T-cell (primary cell): ENCODE measurements at regions of chr2 and their contacts with region 1.

Region 1: DNA sequence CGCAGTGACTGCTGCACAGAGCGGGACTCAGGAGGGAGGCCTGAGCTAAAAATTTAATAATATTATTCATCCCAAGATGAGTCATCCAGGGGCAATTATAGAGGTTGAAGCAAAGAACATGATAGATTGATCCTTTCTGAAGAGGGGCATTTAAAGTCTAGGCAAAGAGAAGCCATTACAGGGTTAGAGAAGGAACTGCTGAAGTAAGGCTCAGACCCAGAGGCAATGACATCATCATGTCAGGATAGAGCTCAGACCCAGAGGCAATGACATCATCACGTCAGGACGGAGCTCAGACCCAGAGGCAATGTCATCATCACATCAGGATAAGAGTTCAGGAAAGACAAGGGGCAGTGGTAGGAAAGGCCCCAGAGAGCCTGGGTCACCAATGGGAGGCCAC is 184.0 kb downstream of the TMEM18 start:
- DNase-seq: no peak
- ATAC-seq: no peak
- H3K4me3 ChIP-seq: no peak overlapping the region
- H3K4me3 Mint-ChIP-seq: no peak overlapping the region
- H3K27ac ChIP-seq: no peak overlapping the region
- H3K27ac Mint-ChIP-seq: no peak overlapping the region
- H3K4me1 ChIP-seq: no peaks in the 10 kb centered on the region
- H3K4me1 Mint-ChIP-seq: peaks cover 0 to 5% (median 0%) of the 10 kb centered on the region in 3 donors
- H3K27me3 ChIP-seq: peaks cover 0 to 15% of the 10 kb centered on the region in 2 experiments
- H3K27me3 Mint-ChIP-seq: peaks cover 16 to 17% of the 10 kb centered on the region in 2 donors

Region 2: GRCh38 chr2:505941-506340 is 12.7 kb after region 1 on chr2:
- CTCF ChIA-PET with region 1: no interaction called
- POLR2A ChIA-PET with region 1: interaction called in 1 of 2 experiments, 12 read pairs
- DNase-seq: no peak
- ATAC-seq: no peak
- H3K4me3 ChIP-seq: no peak overlapping the region
- H3K4me3 Mint-ChIP-seq: no peak overlapping the region
- H3K27ac ChIP-seq: no peak overlapping the region
- H3K27ac Mint-ChIP-seq: no peak overlapping the region
- H3K4me1 ChIP-seq: no peaks in the 10 kb centered on the region
- H3K4me1 Mint-ChIP-seq: no peaks in the 10 kb centered on the region
- H3K27me3 ChIP-seq: peaks cover 0 to 10% of the 10 kb centered on the region in 2 experiments
- H3K27me3 Mint-ChIP-seq: peaks cover 3 to 13% of the 10 kb centered on the region in 2 donors